ENCODE measurements at regions of chr3 and their contacts with region 1.

Region 1: DNA sequence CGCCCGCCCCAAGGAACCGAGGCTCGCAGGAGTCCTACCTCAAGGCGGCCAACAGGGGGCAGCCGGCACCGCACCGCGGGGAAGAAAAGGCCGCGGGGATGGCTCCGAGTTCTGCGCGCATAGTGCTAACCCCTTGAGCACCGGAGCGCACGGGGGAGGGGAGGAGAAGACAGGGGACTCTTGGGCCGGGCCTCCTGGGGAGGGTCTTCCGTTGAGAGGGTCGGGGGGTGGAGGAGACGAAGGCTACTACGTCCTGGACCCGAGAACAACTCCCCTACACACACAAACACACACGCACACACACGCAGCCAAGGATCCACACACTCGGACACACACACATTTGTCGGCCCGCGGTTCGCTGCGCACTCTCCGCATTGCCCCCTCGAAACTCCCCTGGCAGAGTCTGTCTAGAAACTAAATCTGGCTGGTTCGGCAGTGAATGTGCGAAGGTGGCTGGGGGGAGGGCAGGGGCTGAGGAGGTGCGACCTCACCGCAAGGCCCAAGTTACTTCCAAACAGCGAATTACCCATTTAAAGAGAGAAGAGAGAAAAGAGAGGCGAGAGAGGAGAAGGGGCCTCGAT is 1.8 kb downstream of the WNT5A start:
- DNase-seq: peak; percentile 69
- H3K4me3 ChIP-seq: peak overlapping the region; percentile 90
- H3K27ac ChIP-seq: peak overlapping the region; percentile 90
- H3K27me3 ChIP-seq: no peaks in the 10 kb centered on the region
- CTCF ChIP-seq: peak; percentile 77

Region 2: DNA sequence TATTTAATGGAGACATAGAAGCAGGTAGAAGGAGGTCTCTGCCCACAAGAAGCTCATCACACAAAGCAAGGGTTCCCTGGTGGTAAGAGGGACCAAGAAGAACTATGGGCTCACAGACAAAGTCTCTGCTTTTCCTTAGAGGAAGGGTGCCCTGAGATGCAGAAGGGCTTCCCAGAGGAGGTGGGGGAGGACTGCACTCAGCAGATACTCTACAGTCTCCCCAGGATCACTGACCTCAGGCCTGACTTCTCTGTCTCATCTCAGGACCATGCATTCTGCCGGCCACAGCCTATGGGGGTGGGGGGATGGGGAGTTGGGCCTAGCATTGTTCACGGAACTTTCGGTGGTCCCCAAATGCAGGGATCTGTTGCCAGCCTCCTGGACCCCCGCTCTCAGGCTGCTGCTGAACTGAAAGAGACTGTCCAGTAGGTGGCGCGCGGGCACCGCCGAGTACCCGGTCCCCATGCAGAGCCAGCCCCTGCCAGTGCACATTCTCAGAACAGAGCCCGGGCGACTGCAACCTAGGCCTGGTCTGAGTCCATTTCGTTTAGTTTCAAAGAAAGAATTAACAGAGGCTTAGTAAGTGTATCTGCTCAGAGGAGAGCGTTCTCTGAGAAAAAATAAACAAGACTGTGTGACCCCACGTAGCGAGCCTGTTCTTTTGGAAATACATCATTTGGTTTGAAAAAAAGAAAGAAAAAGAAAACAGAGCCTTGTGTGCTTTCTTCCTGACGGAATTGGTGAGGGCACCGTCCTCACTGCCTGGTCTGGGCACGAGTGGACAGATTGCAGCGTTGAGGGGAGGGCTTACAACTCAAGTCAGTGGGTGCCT is 631.5 kb before region 1 on chr3:
- in situ Hi-C with region 1: loop called (anchors 25 kb)
- DNase-seq: peak; percentile 49
- H3K4me3 ChIP-seq: no peak overlapping the region
- H3K27ac ChIP-seq: no peak overlapping the region
- H3K27me3 ChIP-seq: no peaks in the 10 kb centered on the region
- CTCF ChIP-seq: peak; percentile 93

Region 3: GRCh38 chr3:54951405-54951804 is 533.9 kb before region 1 on chr3:
- in situ Hi-C with region 1: loop called (anchors 25 kb)
- DNase-seq: peak; percentile 85
- H3K4me3 ChIP-seq: no peak overlapping the region
- H3K27ac ChIP-seq: no peak overlapping the region
- H3K27me3 ChIP-seq: no peaks in the 10 kb centered on the region
- CTCF ChIP-seq: peak; percentile 88

Region 4: DNA sequence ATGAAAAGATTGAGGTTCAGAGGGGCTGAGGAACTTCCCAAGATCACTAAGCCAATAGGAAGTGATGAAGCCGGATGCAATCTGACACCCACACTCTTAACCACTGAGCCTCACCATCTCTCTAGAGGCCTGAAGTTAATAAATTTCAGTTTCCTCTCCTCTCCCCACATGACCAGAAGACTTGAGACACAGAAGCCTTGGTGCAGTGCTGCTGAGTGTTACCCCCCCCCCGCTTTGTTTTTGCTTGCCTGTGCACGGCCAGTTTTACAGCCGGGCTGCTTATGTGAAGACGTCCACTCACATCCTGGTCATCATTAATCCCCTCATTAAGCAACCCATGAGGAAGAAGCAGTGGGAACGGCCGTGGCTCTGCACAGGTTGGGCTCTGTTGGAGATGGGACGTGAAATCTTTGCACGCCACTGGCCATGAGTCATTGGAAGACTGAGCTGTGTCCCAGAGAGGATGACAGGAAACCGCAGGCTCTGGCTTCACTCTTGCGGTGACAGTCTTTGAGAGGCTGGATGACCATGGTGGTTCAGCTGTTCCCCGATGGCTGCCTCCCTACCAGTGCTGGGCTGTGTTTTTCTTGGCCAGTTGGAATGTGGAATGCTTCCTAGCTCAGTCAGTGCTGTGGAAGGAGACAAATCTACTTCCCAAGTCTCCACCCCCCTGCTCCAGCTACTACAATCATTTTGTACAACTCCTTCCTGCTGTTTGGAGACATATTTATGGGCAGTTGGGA is 324.9 kb before region 1 on chr3:
- in situ Hi-C with region 1: loop called (anchors 25 kb)
- DNase-seq: peak; percentile 99
- H3K4me3 ChIP-seq: no peak overlapping the region
- H3K27ac ChIP-seq: peak overlapping the region; percentile 94
- H3K27me3 ChIP-seq: no peaks in the 10 kb centered on the region
- CTCF ChIP-seq: no peak

Region 5: GRCh38 chr3:55721716-55722484 is 236.6 kb after region 1 on chr3:
- in situ Hi-C with region 1: loop called (anchors 25 kb)
- DNase-seq: peak; percentile 33
- H3K4me3 ChIP-seq: no peak overlapping the region
- H3K27ac ChIP-seq: no peak overlapping the region
- H3K27me3 ChIP-seq: no peaks in the 10 kb centered on the region
- CTCF ChIP-seq: peak; percentile 82